Dorsolateral prefrontal cortex (tissue), 120 donors: ENCODE measurements at regions of chr6 and their contacts with region 1.

Region 1: GRCh38 chr6:154675602-154676088 is 57.6 kb upstream of the SCAF8 start:
- DNase-seq: peak; percentile 73 to 97 (median 85)
- H3K4me3 ChIP-seq: no peak overlapping the region
- H3K27ac ChIP-seq: no peak overlapping the region
- H3K27me3 ChIP-seq: no peaks in the 10 kb centered on the region
- CTCF ChIP-seq: peak in 55 of 56 donors; percentile 98 to 100 (median 100)

Region 2: GRCh38 chr6:154156135-154156896 is 519.3 kb before region 1 on chr6:
- intact Hi-C with region 1: loop called (anchors 5 to 10 kb)
- DNase-seq: peak in 7 of 10 donors; percentile 7 to 57 (median 39)
- H3K4me3 ChIP-seq: peak overlapping the region in 1 of 59 donors; percentile 41
- H3K27ac ChIP-seq: peak overlapping the region in 29 of 59 donors; percentile 1 to 84 (median 43)
- H3K27me3 ChIP-seq: no peaks in the 10 kb centered on the region
- CTCF ChIP-seq: peak; percentile 13 to 73 (median 60)

Region 3: DNA sequence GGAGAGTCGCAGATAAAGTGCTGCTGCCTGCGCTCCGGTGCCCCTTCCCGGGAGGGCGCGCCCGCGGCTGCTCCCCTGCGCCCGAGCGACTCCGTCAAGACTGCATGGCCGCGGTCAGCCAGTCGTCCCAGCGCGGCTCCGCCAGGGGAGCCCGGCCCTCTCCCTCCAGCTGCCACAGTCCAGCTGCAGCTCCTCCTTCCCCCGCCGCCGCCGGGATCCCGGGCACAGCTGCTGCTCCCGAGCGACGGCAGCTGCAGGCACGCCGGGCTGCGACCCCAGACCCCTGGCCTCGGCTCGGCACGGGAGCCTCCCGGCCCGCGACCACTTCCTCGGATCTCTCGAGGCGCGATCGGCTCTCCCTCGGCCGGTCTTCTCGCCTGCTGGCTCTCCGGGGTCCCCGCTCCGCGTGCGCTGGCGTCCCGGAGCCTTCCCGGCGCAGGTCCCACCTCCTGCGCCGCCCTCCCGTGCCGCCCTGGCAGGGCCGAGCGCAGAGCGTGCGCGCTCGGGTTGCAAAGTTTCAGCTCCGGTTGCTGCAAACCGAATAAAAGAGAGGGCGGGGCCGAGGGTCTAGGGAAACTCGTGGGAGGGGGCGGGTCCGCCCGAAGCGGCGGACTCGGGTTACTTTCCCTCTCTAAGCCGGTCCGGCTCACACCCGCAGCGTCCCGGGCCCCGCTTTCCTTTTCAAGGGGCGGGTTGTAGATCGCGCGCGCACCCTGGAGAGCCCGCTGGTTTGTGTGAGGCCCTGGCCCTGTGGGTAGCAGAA is 165.3 kb before region 1 on chr6 and contains the start of gene CNKSR3:
- intact Hi-C with region 1: loop called in 1 of 2 experiments (anchors 10 kb)
- DNase-seq: peak; percentile 28 to 79 (median 71)
- H3K4me3 ChIP-seq: peak within 1 kb of the TSS; percentile 40 to 93 (median 82)
- H3K27ac ChIP-seq: peak within 1 kb of the TSS; percentile 69 to 96 (median 90)
- H3K27me3 ChIP-seq: no peaks in the 10 kb centered on the region
- CTCF ChIP-seq: peak in 27 of 56 donors; percentile 4 to 49 (median 18)
- total RNA-seq, gene CNKSR3: 7.3 to 35.6 (median 15.0) TPM

Region 4: DNA sequence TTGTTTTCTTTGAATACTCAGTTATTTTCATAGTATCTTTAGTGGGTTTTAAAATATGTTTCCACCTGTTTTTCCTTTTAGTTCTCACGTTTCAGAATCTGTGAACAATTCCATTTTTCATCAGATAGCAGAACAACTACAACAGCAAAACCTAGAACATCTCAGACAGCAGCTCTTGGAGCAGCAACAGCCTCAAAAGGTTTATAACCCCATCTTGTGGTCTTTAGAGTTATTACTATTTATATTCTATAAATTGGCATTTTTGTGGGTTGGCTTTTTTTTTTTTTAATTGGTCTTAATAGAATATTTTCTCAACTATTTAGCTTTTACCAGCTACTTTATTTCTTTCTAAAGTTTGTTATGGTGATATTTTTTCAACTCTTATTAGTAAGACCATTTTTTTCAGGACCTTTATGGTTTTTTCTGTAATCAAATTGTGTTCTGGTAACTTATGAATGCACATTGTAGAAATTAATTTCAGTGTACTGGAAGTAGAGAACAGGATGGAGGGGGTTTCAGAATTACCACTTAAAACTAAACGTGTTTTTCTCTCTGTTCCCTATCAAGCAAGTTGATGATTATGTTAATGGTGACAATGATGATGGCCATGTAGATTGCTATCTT is 129.8 kb after region 1 on chr6:
- intact Hi-C with region 1: loop called (anchors 1 to 5 kb)
- DNase-seq: no peak
- H3K4me3 ChIP-seq: no peak overlapping the region
- H3K27ac ChIP-seq: peak overlapping the region in 3 of 59 donors; percentile 3 to 43 (median 18)
- H3K27me3 ChIP-seq: no peaks in the 10 kb centered on the region
- CTCF ChIP-seq: peak; percentile 42 to 83 (median 64)

Region 5: DNA sequence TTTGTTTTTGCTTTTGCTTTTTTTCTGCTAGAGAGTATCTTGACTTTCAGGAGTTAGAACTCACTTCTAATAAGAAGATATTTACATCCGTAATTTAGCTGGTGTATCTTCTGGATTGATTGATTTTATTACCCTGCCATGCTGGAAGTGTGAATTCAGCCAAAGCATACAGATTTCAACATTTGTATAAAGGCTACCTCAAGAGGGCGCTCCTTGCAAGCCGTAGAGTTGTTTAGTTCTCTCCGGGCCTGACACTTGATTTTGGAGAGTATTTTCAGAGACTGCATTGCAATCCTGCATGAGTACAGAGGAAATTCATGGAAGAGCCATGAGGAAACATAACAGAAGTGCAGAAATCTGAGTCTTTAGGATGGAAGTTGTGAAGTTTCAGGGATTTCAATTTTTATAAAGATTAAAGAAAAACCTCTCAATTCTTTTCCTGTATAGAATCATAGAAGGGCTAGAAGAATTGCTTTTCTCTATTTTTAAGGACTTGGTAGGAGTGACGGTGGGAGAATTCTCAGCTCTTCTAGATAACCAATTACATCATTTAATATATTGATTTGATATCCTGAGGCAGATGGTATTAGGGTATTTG is 252.8 kb after region 1 on chr6:
- intact Hi-C with region 1: loop called in 1 of 2 experiments (anchors 5 kb)
- DNase-seq: peak in 6 of 10 donors; percentile 37 to 69 (median 49)
- H3K4me3 ChIP-seq: no peak overlapping the region
- H3K27ac ChIP-seq: no peak overlapping the region
- H3K27me3 ChIP-seq: no peaks in the 10 kb centered on the region
- CTCF ChIP-seq: peak; percentile 65 to 91 (median 78)

Region 6: GRCh38 chr6:155248008-155249001 is 572.7 kb after region 1 on chr6:
- intact Hi-C with region 1: loop called in 1 of 2 experiments (anchors 10 kb)
- DNase-seq: peak in 8 of 10 donors; percentile 35 to 81 (median 68)
- H3K4me3 ChIP-seq: peak overlapping the region in 7 of 59 donors; percentile 1 to 40 (median 22)
- H3K27ac ChIP-seq: peak overlapping the region in 45 of 59 donors; percentile 3 to 86 (median 55)
- H3K27me3 ChIP-seq: no peaks in the 10 kb centered on the region
- CTCF ChIP-seq: peak; percentile 34 to 87 (median 79)